Activated naive CD4-positive, alpha-beta T cell treated with anti-CD3 and anti-CD28 coated beads for 36 hours (primary cell): ENCODE measurements at regions of chr12 and their contacts with region 1.

Region 1: GRCh38 chr12:69900720-69901131 is 75.7 kb downstream of the MYRFL start:
- DNase-seq: peak; percentile 81
- H3K4me3 Mint-ChIP-seq: no peak overlapping the region
- H3K27ac Mint-ChIP-seq: no peak overlapping the region
- H3K4me1 Mint-ChIP-seq: no peaks in the 10 kb centered on the region
- H3K27me3 Mint-ChIP-seq: no peaks in the 10 kb centered on the region

Region 2: GRCh38 chr12:69868695-69869094 is 32.0 kb before region 1 on chr12:
- CTCF ChIA-PET with region 1: no interaction called
- intact Hi-C with region 1: no loop called
- DNase-seq: no peak
- H3K4me3 Mint-ChIP-seq: no peak overlapping the region
- H3K27ac Mint-ChIP-seq: no peak overlapping the region
- H3K4me1 Mint-ChIP-seq: no peaks in the 10 kb centered on the region
- H3K27me3 Mint-ChIP-seq: peaks cover 18% of the 10 kb centered on the region

Region 3: DNA sequence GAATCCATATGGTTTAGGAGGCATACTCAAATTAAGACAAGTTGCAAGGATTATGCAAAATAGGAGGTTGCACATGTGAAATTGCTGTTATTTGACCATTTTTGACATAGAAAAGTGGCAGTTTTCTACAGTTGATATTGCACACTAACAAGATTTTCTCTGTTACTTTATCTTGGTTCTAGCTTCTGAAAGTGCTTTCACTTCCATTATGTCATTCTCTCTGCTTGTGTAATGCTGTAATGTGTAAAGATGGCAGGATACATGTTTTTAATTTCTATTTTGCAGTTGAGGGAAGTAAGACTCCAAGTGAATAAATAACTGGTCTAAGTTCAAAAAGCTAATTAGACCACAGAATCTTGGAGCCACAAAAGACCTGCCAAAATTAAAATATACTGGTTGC is 15.1 kb before region 1 on chr12:
- CTCF ChIA-PET with region 1: interaction called, 19 read pairs
- intact Hi-C with region 1: no loop called
- DNase-seq: no peak
- H3K4me3 Mint-ChIP-seq: no peak overlapping the region
- H3K27ac Mint-ChIP-seq: no peak overlapping the region
- H3K4me1 Mint-ChIP-seq: no peaks in the 10 kb centered on the region
- H3K27me3 Mint-ChIP-seq: no peaks in the 10 kb centered on the region

Region 4: DNA sequence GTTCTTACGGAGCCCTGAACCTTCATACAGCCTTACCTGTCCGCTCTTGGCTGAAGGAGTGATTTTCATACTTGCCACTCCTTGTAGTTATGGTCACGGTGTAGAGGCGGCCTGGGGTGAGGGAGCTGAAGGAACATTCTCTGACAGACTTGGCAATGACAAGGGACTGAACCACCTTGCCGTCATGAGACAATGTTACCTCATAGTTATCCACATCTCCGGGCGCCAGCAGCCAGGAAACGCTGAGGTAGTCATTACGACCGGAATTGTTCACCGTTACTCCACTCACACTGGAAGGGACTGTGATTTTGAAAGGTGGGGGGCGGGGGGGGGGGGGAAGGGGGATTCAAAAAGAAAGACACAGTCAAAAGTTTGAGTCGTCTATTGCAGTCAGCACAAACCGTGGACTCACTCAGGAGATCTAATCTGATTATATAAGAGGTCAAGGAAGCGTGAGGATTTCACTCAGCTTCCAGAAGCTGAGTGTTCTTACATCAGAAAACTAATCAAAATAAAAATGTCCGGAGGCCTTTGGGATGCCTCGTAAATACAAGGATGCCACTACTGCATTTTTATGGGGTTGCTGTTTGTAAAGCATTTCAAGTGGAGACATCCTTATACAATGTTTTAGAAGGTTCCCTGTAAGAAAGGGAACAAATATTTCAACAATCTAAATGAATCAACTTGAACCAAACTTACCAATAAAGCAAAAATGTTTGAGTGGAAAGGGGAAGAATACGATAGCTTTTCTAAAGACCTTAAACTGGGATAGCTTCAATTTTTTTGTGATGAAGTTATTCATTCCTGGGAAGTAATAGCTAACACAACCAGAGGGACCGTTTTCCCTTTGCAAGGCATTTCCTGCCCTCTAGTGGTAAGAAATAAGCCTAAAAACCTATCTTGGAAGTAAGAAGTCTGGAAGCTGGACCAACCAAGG is 675.9 kb after region 1 on chr12:
- CTCF ChIA-PET with region 1: interaction called, 23 read pairs
- intact Hi-C with region 1: loop called (anchors 1 kb)
- DNase-seq: no peak
- H3K4me3 Mint-ChIP-seq: no peak overlapping the region
- H3K27ac Mint-ChIP-seq: no peak overlapping the region
- H3K4me1 Mint-ChIP-seq: no peaks in the 10 kb centered on the region
- H3K27me3 Mint-ChIP-seq: peaks cover 7% of the 10 kb centered on the region

Region 5: DNA sequence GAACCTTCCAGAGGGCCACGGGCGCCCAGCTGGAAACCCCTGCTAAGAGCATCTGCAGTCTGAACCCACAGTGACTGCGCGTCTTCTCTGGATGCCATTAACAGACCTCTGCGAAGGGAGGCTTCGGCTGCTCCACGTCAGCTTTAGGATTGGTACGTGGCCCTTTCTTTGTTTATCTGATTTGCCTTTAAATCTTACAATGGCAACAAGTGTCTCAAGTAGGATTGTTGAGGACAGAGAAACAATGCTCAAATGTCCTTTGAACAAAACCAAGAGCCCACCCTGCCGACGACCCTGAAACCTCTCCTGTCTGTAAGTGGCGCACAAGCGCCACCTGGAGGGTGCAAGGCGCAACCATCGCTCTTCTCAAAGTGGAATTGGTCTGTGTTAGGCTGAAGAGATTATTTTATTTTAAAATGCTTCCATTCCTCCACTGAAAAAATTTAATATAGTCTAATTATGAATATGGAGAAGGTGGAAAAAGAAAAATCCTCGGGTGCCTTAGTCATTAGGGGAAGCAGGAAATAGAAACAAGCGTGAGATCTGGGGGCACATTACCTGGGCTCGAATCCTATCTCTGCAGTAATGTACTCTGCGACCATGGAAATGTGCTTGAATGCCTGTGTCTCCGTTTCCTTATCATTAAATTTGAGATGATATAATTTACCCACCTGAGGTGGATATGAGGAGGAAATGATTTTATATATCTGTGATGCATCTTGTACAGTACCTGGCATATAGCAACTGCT is 819.1 kb after region 1 on chr12:
- CTCF ChIA-PET with region 1: interaction called, 6 read pairs
- intact Hi-C with region 1: loop called (anchors 1 kb)
- DNase-seq: peak; percentile 28
- H3K4me3 Mint-ChIP-seq: peak overlapping the region; percentile 45
- H3K27ac Mint-ChIP-seq: no peak overlapping the region
- H3K4me1 Mint-ChIP-seq: peaks cover 6% of the 10 kb centered on the region
- H3K27me3 Mint-ChIP-seq: peaks cover 9% of the 10 kb centered on the region